GM12878 (cell line): ENCODE measurements at regions of chr9 and their contacts with region 1.

Region 1: DNA sequence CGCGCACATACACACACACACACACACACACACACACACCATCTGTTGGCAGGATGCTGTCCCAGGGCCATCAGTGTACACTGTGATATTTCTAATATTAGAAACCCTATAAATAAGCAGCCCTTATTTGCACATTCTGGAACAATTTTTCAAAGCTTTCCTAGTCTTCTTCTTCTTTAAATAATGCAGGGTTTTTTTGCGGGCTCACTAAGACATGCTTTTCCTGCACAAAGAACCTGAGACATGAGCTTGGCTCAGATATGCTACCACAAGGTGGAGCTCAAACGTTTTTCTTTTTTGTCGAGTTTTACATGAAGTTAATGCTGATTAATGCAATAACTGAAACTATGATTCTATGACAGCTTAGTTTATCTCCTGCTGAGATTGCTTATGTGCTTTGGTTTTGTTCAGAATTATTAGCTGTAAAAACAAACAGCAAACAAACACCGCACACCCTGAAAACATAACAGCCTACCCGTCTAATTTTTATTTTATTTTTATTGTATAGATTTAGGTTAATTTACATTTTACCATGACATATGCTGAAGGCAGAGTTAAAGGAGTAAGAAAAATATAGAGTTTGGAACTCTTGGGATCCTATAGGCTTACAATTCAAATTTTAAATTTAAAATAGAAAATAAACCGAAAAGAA is 95.8 kb downstream of the ALDH1A1 start:
- DNase-seq: no peak
- ATAC-seq: peak; percentile 74
- H3K4me3 ChIP-seq: no peak overlapping the region
- H3K27ac ChIP-seq: no peak overlapping the region
- H3K4me1 ChIP-seq: no peaks in the 10 kb centered on the region
- H3K27me3 ChIP-seq: no peaks in the 10 kb centered on the region
- CTCF ChIP-seq: peak; percentile 43 to 55 (median 44); a peak in 5 of 6 replicates
- EP300 ChIP-seq: no peak
- POLR2A ChIP-seq: no peak
- RAD21 ChIP-seq: peak; percentile 44; the same call in 1 of the 2 replicates

Region 2: DNA sequence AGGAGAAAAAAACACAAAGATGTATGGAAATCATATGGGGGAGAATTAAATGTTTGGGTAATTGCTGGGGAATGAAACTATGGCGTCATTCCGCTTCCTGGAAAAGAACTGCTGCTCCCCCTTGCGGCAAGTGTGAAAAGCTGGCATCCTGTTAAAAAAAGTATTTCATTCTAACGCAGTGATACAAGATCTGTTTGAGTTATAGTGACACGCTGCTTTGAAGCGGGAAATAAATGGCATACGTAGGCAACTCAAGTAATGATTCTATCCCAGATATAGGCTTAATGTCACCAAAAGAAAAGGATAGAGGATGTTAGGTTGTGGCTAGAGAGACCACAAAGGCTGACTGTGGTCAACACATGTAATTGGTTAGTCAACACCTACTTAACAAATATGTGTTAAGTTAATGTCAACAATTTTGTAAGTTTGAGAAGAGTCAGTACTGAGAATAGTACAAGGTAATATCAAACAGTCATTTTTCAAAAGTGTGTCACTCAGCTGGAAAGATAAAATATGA is 166.0 kb after region 1 on chr9:
- CTCF ChIA-PET with region 1: interaction called, 44 read pairs
- POLR2A ChIA-PET with region 1: no interaction called
- RAD21 ChIA-PET with region 1: interaction called, 13 read pairs
- SMC1A ChIA-PET with region 1: interaction called, 24 read pairs
- in situ Hi-C with region 1: no loop called
- intact Hi-C with region 1: no loop called
- DNase-seq: peak; percentile 3
- ATAC-seq: peak; percentile 64
- H3K4me3 ChIP-seq: no peak overlapping the region
- H3K27ac ChIP-seq: no peak overlapping the region
- H3K4me1 ChIP-seq: no peaks in the 10 kb centered on the region
- H3K27me3 ChIP-seq: no peaks in the 10 kb centered on the region; a peak in 1 of 4 replicates
- CTCF ChIP-seq: peak; percentile 65 to 78 (median 70); a peak in 5 of 6 replicates
- EP300 ChIP-seq: no peak
- POLR2A ChIP-seq: no peak
- RAD21 ChIP-seq: peak; percentile 63

Region 3: GRCh38 chr9:73081979-73082657 is 225.0 kb after region 1 on chr9:
- CTCF ChIA-PET with region 1: interaction called, 11 read pairs
- POLR2A ChIA-PET with region 1: no interaction called
- RAD21 ChIA-PET with region 1: interaction called, 10 read pairs
- SMC1A ChIA-PET with region 1: interaction called, 16 read pairs
- in situ Hi-C with region 1: loop called (anchors 5 kb)
- intact Hi-C with region 1: loop called (anchors 2 kb)
- DNase-seq: no peak
- ATAC-seq: peak; percentile 69
- H3K4me3 ChIP-seq: no peak overlapping the region
- H3K27ac ChIP-seq: no peak overlapping the region
- H3K4me1 ChIP-seq: no peaks in the 10 kb centered on the region
- H3K27me3 ChIP-seq: no peaks in the 10 kb centered on the region
- CTCF ChIP-seq: peak; percentile 64 to 76 (median 67)
- EP300 ChIP-seq: no peak
- POLR2A ChIP-seq: no peak
- RAD21 ChIP-seq: peak; percentile 75

Region 4: GRCh38 chr9:73093740-73094379 is 236.8 kb after region 1 on chr9:
- CTCF ChIA-PET with region 1: no interaction called
- POLR2A ChIA-PET with region 1: no interaction called
- RAD21 ChIA-PET with region 1: no interaction called
- SMC1A ChIA-PET with region 1: no interaction called
- in situ Hi-C with region 1: loop called (anchors 5 kb)
- intact Hi-C with region 1: no loop called
- DNase-seq: no peak
- ATAC-seq: no peak
- H3K4me3 ChIP-seq: no peak overlapping the region
- H3K27ac ChIP-seq: no peak overlapping the region
- H3K4me1 ChIP-seq: no peaks in the 10 kb centered on the region
- H3K27me3 ChIP-seq: no peaks in the 10 kb centered on the region
- CTCF ChIP-seq: no peak
- EP300 ChIP-seq: no peak
- POLR2A ChIP-seq: no peak
- RAD21 ChIP-seq: no peak